Activated T-helper 2 cell treated with anti-CD3 and anti-CD28 coated beads, Interferon-gamma antibody, Interleukin-2, Interleukin-4, amounts not matched to agents 10 μg/mL and 5 μg/mL and 100 μg/mL, durations not matched to agents 14 hours and 24 hours and 36 hours (primary cell): ENCODE measurements at regions of chr18 and their contacts with region 1.

Region 1: DNA sequence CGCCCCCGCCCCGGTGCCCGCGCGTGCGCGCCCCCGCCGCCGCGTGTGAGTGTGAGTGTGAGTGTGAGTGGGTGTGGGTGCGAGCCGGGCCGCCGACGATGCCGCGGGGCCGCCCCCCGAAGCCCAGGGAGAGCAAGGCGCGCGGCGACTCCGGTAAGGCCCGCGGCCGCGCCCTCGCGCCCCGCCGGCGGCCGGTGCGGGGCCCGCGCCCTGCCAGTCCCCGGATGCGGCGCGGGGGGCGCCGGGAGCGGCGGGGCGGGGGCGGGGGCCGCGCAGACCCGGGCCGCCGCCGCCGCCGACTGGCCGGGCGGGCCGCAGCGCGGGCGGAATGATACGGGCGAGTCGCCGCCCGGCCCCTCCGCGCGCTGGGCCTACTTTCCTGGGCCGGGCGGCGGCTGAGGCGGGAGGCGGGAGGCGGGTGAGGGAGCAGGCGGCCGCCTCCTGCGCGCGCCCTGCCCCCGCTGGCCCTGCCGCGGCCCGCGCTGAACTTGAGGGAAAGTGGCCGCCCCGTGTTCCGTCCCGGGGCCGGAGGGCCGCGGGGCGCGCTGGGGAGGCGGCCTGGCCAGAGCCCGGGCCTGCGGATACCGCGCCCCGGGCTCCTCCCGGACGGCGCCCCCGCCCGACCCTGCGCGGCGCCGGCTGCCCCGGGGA is at the start of gene ZNF236:
- DNase-seq: peak; percentile 68
- H3K4me3 Mint-ChIP-seq: peak within 1 kb of the TSS; percentile 91
- H3K27ac Mint-ChIP-seq: peak within 1 kb of the TSS; percentile 93
- H3K4me1 Mint-ChIP-seq: peaks cover 41% of the 10 kb centered on the region
- H3K27me3 Mint-ChIP-seq: no peaks in the 10 kb centered on the region
- total RNA-seq, gene ZNF236: 19.8 and 22.9 TPM in 2 replicates

Region 2: GRCh38 chr18:76859474-76860339 is 37.1 kb after region 1 on chr18:
- intact Hi-C with region 1: loop called (anchors 2 kb)
- DNase-seq: peak; percentile 30
- H3K4me3 Mint-ChIP-seq: peak overlapping the region; percentile 51
- H3K27ac Mint-ChIP-seq: peak overlapping the region; percentile 93
- H3K4me1 Mint-ChIP-seq: peaks cover 44% of the 10 kb centered on the region
- H3K27me3 Mint-ChIP-seq: no peaks in the 10 kb centered on the region

Region 3: GRCh38 chr18:76875390-76876325 is 53.0 kb after region 1 on chr18:
- intact Hi-C with region 1: loop called (anchors 2 kb)
- DNase-seq: peak; percentile 22
- H3K4me3 Mint-ChIP-seq: no peak overlapping the region
- H3K27ac Mint-ChIP-seq: peak overlapping the region; percentile 85
- H3K4me1 Mint-ChIP-seq: peaks cover 14% of the 10 kb centered on the region
- H3K27me3 Mint-ChIP-seq: no peaks in the 10 kb centered on the region

Region 4: DNA sequence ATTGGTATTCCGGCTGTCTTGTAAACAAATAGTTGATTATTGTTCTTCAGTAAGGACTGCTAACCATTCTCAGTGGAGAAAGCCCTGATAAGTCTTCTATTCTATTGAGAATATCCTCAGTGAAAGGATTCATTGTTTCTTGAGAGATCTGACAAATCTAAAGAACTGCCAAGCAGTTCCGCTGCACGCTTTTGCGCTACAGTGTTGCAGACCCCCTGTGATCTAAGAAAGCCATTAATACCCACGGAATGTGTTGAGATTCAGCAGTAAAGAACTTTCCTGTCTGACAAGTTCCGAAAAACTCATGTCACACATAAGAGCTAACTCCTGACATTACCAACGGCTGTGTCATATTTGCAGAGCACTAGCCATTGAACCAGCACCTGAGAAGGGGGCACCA is 63.5 kb after region 1 on chr18:
- intact Hi-C with region 1: no loop called
- DNase-seq: no peak
- H3K4me3 Mint-ChIP-seq: no peak overlapping the region
- H3K27ac Mint-ChIP-seq: peak overlapping the region; percentile 9
- H3K4me1 Mint-ChIP-seq: peaks cover 3% of the 10 kb centered on the region
- H3K27me3 Mint-ChIP-seq: no peaks in the 10 kb centered on the region

Region 5: GRCh38 chr18:77061946-77062517 is 239.4 kb after region 1 on chr18:
- intact Hi-C with region 1: loop called (anchors 2 kb)
- DNase-seq: no peak
- H3K4me3 Mint-ChIP-seq: peak overlapping the region; percentile 60
- H3K27ac Mint-ChIP-seq: peak overlapping the region; percentile 98
- H3K4me1 Mint-ChIP-seq: peaks cover 83% of the 10 kb centered on the region
- H3K27me3 Mint-ChIP-seq: no peaks in the 10 kb centered on the region

Region 6: GRCh38 chr18:77132371-77133050 is 309.9 kb after region 1 on chr18 and contains the start of gene MBP:
- intact Hi-C with region 1: loop called (anchors 10 kb)
- DNase-seq: peak; percentile 55
- H3K4me3 Mint-ChIP-seq: peak within 1 kb of the TSS; percentile 98
- H3K27ac Mint-ChIP-seq: peak within 1 kb of the TSS; percentile 95
- H3K4me1 Mint-ChIP-seq: peaks cover 56% of the 10 kb centered on the region
- H3K27me3 Mint-ChIP-seq: no peaks in the 10 kb centered on the region
- total RNA-seq, gene MBP: 53.7 and 54.3 TPM in 2 replicates